Activated CD4-positive, alpha-beta memory T cell treated with anti-CD3 and anti-CD28 coated beads for 36 hours (primary cell): ENCODE measurements at regions of chr9 and their contacts with region 1.

Region 1: DNA sequence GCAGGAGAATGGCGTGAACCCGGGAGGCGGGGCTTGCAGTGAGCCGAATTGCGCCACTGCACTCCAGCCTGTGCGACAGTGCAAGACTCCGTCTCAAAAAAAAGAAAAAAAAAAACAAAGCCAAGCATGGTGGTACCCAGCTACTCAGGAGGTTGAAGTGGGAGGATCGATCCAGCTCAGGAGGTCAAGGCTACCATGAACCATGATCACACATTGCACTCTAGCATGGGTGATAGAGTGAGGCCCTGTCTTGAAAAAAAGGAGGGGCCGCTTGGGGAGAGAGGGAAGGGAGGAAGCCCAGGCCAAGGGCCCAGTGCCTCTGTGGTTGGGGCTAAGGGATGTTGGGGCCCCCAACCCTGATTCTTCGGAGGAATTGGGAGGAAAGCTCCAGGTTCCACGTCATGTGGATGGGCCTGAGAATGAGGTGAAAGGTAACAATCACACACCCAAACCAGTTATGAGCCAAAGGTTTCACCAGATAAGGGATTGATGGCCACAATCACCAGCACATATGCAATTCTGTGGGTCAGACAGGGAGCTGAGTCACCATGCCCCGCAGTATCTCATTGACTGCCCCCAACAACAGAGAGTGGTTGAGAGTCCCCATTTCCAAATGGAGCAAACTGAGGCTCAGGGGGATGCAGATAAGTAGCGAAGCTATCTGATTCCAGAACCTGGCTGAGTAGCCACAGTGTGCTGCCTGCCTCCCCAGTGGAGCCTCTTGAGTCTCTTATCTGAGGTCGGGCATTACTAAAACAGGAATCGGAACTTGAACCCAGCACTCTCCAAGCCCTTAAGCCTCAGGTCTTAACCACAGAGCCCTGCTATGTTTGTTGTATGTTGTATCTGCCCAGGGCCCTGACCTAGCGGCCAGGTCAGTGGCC is 20.5 kb downstream of the SWI5 start:
- DNase-seq: no peak
- H3K4me3 Mint-ChIP-seq: no peak overlapping the region
- H3K27ac Mint-ChIP-seq: no peak overlapping the region
- H3K4me1 Mint-ChIP-seq: no peaks in the 10 kb centered on the region
- H3K27me3 Mint-ChIP-seq: no peaks in the 10 kb centered on the region

Region 2: DNA sequence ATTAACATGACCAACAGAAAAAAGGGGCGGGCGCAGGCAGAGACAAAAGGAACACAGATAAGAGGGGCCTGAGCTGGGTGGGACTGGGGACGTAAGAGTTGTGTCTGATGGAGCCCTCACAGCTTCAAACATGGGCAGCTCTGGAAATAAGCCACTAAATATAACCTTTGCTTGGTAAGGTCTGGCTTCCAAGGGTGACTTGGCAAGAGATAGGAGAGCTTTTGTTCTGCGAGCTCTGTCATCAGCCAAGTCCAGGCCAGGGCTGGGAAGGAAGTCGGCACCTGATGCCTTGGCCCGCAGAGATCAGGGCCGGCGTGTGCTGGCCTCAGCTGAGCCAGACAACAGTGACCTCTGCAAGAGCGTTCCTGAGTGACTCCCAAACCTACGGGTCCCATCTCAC is 13.9 kb after region 1 on chr9:
- CTCF ChIA-PET with region 1: interaction called, 10 read pairs
- POLR2A ChIA-PET with region 1: no interaction called
- intact Hi-C with region 1: no loop called
- DNase-seq: no peak
- H3K4me3 Mint-ChIP-seq: no peak overlapping the region
- H3K27ac Mint-ChIP-seq: no peak overlapping the region
- H3K4me1 Mint-ChIP-seq: no peaks in the 10 kb centered on the region
- H3K27me3 Mint-ChIP-seq: no peaks in the 10 kb centered on the region

Region 3: DNA sequence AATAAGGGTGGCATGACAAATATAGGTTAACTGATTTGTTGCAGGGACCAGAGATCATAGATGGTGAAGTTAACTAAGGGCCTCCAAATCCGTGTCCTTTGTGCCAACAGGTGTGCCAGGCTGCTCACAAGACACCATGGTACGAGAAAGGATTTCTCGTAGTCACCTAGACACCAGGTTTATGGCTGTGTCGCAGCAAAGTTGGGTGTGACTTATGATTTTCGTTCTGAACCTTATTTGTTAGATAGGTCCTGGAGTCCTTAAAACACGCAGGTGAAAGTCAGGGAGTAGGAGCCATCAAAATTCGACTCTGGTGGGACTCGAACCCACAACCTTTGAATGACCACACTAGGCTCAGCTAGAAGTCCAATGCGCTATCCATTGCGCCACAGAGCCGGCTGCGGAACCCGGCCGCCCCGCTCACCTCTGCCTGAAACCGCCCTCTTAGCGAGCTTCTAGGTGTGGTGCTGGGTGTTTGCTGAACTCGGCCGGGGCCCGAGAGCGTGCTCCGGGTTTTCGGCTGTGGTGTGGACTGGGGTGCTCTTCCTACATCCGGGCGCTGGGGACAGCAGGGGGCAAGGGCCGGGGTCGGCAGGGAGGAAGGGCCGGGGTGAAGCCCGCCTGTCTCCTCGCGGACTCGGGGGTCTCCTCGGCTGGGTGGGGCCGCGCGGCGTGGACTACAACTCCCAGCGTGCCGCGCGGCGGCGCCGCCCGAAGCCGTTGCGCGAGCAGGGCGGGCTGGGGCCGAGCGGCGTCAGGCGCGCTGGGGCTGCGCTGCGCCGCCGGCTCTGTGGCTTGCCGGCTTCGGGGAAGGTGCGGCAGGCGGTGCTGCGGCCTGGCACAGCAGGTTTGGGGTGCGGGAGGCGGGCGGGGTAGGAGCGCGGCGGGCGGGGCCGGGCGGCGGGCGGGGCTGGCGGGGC is 43.5 kb after region 1 on chr9 and contains the start of gene SLC27A4:
- CTCF ChIA-PET with region 1: interaction called, 19 read pairs
- POLR2A ChIA-PET with region 1: interaction called, 5 read pairs
- intact Hi-C with region 1: loop called (anchors 1 kb)
- DNase-seq: peak; percentile 84
- H3K4me3 Mint-ChIP-seq: peak within 1 kb of the TSS; percentile 90
- H3K27ac Mint-ChIP-seq: peak within 1 kb of the TSS; percentile 76
- H3K4me1 Mint-ChIP-seq: peaks cover 5% of the 10 kb centered on the region
- H3K27me3 Mint-ChIP-seq: no peaks in the 10 kb centered on the region
- total RNA-seq, gene SLC27A4: 12.6 to 14.1 TPM

Region 4: GRCh38 chr9:128361986-128362646 is 65.5 kb after region 1 on chr9:
- CTCF ChIA-PET with region 1: interaction called, 15 read pairs
- POLR2A ChIA-PET with region 1: no interaction called
- intact Hi-C with region 1: loop called (anchors 5 kb)
- DNase-seq: peak; percentile 81
- H3K4me3 Mint-ChIP-seq: peak overlapping the region; percentile 50
- H3K27ac Mint-ChIP-seq: peak overlapping the region; percentile 42
- H3K4me1 Mint-ChIP-seq: peaks cover 9% of the 10 kb centered on the region
- H3K27me3 Mint-ChIP-seq: no peaks in the 10 kb centered on the region

Region 5: DNA sequence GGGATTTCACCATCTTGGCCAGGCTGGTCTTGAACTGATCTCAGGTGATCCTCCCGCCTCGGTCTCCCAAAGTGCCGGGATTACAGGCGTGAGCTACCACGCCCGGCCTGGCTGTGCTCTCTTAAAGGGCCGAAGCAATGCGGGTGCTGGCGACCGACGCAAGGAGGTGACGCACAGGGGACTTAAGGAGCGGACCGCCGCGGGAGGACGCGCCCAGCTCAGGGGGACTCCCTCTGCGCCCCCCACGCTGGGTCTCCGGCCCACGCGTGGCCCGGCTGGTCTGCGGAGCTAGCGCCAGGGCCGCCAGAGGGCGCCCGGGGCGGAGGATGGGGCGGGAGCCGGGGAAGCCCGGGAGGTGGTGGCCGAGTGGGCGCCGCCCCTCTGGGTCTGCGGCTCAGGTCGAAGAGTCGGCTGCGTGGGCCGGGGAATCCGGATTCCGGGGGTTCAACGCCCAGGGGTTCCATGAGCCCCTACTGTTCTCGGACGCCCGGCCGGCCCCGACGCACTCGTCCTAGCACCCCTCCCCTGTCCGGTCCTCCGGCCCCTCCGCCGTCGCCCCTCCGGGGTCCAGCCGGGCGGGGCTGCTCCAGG is 123.6 kb after region 1 on chr9:
- CTCF ChIA-PET with region 1: interaction called, 10 read pairs
- POLR2A ChIA-PET with region 1: no interaction called
- intact Hi-C with region 1: no loop called
- DNase-seq: peak; percentile 78
- H3K4me3 Mint-ChIP-seq: peak overlapping the region; percentile 69
- H3K27ac Mint-ChIP-seq: no peak overlapping the region
- H3K4me1 Mint-ChIP-seq: peaks cover 9% of the 10 kb centered on the region
- H3K27me3 Mint-ChIP-seq: peaks cover 28% of the 10 kb centered on the region